Breast epithelium (tissue), 4 donors: ENCODE measurements at regions of chr5 and their contacts with region 1.

Region 1: GRCh38 chr5:136424835-136425584 is 59.7 kb upstream of the TRPC7 start:
- DNase-seq: peak in 1 of 2 donors; percentile 63
- H3K4me3 ChIP-seq: no peak overlapping the region
- H3K27ac ChIP-seq: no peak overlapping the region
- H3K4me1 ChIP-seq: no peaks in the 10 kb centered on the region
- H3K27me3 ChIP-seq: no peaks in the 10 kb centered on the region
- CTCF ChIP-seq: peak in 2 of 3 donors; percentile 23 to 38
- POLR2A ChIP-seq: no peak

Region 2: GRCh38 chr5:136409000-136409399 is 16.0 kb before region 1 on chr5:
- intact Hi-C with region 1: loop called (anchors 1 kb)
- DNase-seq: no peak
- H3K4me3 ChIP-seq: no peak overlapping the region
- H3K27ac ChIP-seq: no peak overlapping the region
- H3K4me1 ChIP-seq: no peaks in the 10 kb centered on the region
- H3K27me3 ChIP-seq: no peaks in the 10 kb centered on the region
- CTCF ChIP-seq: no peak
- POLR2A ChIP-seq: no peak

Region 3: GRCh38 chr5:137114529-137114928 is 689.5 kb after region 1 on chr5:
- intact Hi-C with region 1: no loop called
- DNase-seq: no peak
- H3K4me3 ChIP-seq: no peak overlapping the region
- H3K27ac ChIP-seq: no peak overlapping the region
- H3K4me1 ChIP-seq: no peaks in the 10 kb centered on the region
- H3K27me3 ChIP-seq: no peaks in the 10 kb centered on the region
- CTCF ChIP-seq: no peak
- POLR2A ChIP-seq: no peak